ENCODE measurements at regions of chr20 and their contacts with region 1.

Region 1: GRCh38 chr20:51595058-51595532 is 52.6 kb upstream of the NFATC2 start:
- DNase-seq: peak; percentile 54 to 82 (median 61)
- H3K4me3 ChIP-seq: no peak overlapping the region
- H3K4me3 Mint-ChIP-seq: peak overlapping the region in 5 of 7 donors; percentile 27 to 71 (median 46)
- H3K27ac ChIP-seq: no peak overlapping the region
- H3K27ac Mint-ChIP-seq: peak overlapping the region; percentile 16 to 85 (median 52)
- H3K4me1 ChIP-seq: peaks cover 10% of the 10 kb centered on the region
- H3K4me1 Mint-ChIP-seq: peaks cover 11 to 22% (median 16%) of the 10 kb centered on the region in 3 donors
- H3K27me3 ChIP-seq: no peaks in the 10 kb centered on the region
- H3K27me3 Mint-ChIP-seq: peaks cover 0 to 3% of the 10 kb centered on the region in 2 donors

Region 2: DNA sequence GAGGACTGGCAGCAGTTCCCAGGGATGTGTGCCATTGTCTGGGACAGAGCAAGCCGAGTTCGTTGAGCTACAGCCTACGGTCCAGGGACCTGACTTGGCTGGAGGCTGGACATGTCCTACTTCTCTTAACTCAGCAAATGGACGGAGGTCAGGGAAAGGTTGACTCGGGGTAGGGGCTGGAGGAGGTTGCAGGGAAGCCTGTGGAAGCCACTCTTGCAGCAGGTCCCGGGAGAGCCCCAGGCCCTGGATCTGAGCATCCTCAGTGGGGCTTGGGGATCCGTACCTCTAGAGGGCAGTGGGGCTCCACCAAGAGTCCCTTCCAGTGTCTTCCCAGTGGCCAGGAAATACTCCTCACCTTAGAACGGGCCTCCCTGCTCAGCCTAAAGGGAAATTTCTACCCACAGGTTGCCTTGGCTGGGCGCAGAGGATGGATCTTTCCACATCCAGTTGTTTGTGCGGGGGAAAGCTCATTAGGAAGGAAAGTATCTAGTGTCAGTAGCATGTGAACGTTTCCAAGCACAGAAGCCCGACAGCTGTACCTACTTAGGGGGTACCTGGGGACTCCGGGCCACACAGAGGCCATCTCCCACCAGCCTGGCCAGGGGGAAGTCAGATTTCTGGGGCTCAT is 222.8 kb before region 1 on chr20:
- CTCF ChIA-PET with region 1: interaction called, 30 read pairs
- POLR2A ChIA-PET with region 1: no interaction called
- DNase-seq: peak; percentile 26 to 66 (median 41)
- H3K4me3 ChIP-seq: no peak overlapping the region
- H3K4me3 Mint-ChIP-seq: no peak overlapping the region
- H3K27ac ChIP-seq: no peak overlapping the region
- H3K27ac Mint-ChIP-seq: no peak overlapping the region
- H3K4me1 ChIP-seq: no peaks in the 10 kb centered on the region
- H3K4me1 Mint-ChIP-seq: peaks cover 5 to 10% (median 5%) of the 10 kb centered on the region in 3 donors
- H3K27me3 ChIP-seq: no peaks in the 10 kb centered on the region
- H3K27me3 Mint-ChIP-seq: peaks cover 0 to 1% of the 10 kb centered on the region in 2 donors

Region 3: GRCh38 chr20:51378171-51378929 is 216.7 kb before region 1 on chr20:
- CTCF ChIA-PET with region 1: interaction called, 30 read pairs
- POLR2A ChIA-PET with region 1: no interaction called
- DNase-seq: no peak
- H3K4me3 ChIP-seq: no peak overlapping the region
- H3K4me3 Mint-ChIP-seq: no peak overlapping the region
- H3K27ac ChIP-seq: no peak overlapping the region
- H3K27ac Mint-ChIP-seq: peak overlapping the region in 6 of 8 donors; percentile 28 to 95 (median 74)
- H3K4me1 ChIP-seq: no peaks in the 10 kb centered on the region
- H3K4me1 Mint-ChIP-seq: peaks cover 4 to 16% (median 5%) of the 10 kb centered on the region in 3 donors
- H3K27me3 ChIP-seq: no peaks in the 10 kb centered on the region
- H3K27me3 Mint-ChIP-seq: peaks cover 0 to 3% of the 10 kb centered on the region in 2 donors

Measured in CD8-positive, alpha-beta memory T cell (primary cell).